ENCODE measurements at regions of chr15 and their contacts with region 1.

Region 1: DNA sequence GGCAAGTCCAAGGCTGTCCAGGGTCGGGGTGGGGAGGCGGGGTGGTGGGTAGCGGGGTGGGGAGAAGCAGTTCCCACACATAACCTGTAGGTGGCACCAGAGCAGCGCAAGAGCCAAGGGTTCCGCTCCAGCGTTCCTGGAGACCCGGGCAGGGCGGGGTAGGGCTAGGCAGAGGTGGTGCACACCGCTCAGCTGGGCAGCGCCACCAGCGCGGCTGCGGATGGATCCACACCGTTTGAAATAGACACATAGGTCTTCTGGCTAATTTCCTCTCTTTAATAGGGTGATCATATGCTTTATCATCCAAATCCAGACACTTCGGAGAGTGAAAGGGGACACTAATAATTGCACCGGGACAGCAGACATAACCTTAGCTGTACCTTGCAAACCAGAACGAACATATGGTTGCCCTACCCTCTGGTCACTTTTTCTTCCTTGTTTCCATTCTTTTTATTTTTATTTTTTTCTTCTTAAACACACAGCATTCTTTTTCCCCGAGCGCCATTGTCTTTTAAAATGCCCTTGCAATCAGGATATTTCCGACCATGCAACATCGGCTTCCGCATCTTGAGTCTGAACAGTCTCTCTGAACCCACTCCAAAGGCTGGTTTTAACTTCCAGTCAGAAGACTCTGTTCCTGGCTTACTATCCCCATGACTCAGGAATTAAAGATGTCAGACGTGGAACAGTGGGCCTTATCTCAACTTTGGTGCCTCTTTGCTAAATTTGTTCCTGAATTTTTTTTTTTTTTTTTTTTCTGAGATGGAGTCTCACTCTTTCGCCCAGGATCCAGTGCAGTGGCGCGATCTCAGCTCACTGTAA is 12.5 kb upstream of the ZSCAN2 start:
- DNase-seq: peak; percentile 50
- H3K4me3 ChIP-seq: peak overlapping the region; percentile 48
- H3K27ac ChIP-seq: no peak overlapping the region
- H3K27me3 ChIP-seq: peaks cover 5% of the 10 kb centered on the region
- CTCF ChIP-seq: peak; percentile 71

Region 2: DNA sequence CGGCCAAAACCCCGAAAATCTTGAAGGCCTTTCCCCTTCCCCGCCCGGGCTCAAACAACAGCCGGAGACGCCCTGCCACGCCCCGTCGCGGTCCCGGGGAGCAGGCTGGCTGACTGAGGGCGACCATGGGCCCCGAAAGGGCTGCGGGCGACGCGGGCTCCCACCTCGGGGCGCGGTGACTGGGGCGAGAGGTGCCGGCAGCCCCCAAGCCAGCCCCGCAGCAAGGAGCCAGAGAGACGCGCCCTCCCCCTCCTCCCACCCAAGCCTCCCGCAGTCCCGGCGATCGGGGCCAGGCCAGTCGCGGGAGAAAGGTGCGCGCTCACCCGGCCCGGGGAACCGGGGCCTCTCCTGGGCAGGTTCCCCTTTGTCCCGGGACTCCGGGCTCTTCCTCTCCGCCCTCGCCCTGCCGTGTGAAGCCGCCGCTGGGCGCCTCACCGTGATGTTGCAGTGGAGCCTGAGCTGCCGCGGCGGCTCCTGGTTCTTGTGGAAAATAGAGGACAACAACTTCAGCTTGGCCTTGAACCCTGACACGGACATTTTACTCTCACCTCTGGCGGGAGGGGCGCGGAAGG is 18.0 kb before region 1 on chr15:
- CTCF ChIA-PET with region 1: interaction called, 13 read pairs
- POLR2A ChIA-PET with region 1: interaction called, 3 read pairs
- DNase-seq: no peak
- H3K4me3 ChIP-seq: peak overlapping the region; percentile 73
- H3K27ac ChIP-seq: peak overlapping the region; percentile 88
- H3K27me3 ChIP-seq: no peaks in the 10 kb centered on the region
- CTCF ChIP-seq: no peak

Region 3: DNA sequence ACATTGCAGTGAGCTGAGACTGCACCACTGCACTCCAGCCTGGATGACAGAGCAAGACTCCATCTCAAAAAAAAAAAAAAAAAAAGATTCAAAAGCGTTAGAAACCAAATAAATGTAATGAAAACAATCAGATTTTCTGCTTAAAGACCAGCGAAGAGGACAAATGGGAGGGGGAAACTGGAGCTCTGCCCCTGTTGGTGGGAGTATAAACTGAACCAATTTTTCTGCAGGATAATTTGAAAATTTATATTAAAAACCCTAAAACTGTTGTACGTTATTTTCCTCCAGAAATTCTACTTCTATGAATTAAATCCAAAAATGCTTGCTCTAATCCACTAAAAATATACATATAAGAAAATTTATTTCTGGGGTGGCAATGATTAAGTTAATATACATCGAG is 12.8 kb before region 1 on chr15:
- CTCF ChIA-PET with region 1: interaction called, 13 read pairs
- POLR2A ChIA-PET with region 1: interaction called, 3 read pairs
- DNase-seq: no peak
- H3K4me3 ChIP-seq: no peak overlapping the region
- H3K27ac ChIP-seq: no peak overlapping the region
- H3K27me3 ChIP-seq: no peaks in the 10 kb centered on the region
- CTCF ChIP-seq: no peak

Region 4: DNA sequence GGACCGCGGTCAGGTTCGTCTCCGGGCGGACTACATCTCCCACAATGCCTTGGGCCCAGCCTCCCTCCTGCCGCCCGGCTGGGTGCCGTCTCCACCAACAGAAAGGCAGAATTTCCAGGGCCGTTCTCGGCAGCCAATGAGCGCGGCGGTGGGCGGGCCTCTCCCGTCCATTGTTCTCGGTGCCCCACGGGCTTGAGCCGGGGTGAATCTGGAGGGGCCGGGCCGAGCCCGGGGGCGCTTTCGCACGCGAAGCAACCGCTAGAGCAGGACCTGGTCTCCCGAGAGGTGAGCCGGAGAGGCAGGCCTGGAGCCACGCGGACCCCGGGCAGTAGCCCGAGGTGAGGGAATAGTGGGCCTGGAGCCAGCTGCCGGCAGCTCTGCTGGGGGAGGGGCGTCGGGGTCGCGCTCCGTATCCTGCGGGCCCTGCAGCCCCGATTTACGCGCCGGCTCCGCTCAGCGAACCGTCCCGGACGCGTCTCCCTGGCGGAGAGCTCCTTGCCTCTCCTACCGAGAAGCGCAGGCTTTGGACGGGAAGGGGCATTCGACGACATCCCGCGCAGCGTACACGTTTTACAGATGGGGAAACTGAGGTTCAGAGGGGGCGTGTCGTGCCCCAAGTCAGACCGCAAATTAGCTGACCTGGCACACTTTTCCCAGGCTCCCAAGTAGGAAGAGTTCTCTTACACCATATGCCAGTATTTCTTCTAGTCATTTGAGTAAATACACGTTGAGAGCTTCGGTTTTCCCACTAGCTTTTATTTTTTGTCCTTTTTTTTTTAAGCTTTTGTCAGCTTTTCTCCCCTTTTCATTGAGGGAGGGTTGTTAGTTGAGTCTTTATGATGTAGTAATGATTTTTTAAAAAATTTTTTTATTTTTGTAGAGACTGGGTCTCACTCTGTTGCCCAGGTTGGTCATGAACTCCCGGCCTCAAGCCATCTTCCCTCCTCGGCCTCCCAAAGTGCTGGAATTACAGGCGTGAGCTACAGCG is 12.9 kb after region 1 on chr15 and contains the start of gene ZSCAN2:
- CTCF ChIA-PET with region 1: interaction called, 39 read pairs
- POLR2A ChIA-PET with region 1: no interaction called
- DNase-seq: peak; percentile 77
- H3K4me3 ChIP-seq: peak within 1 kb of the TSS; percentile 99
- H3K27ac ChIP-seq: peak within 1 kb of the TSS; percentile 68
- H3K27me3 ChIP-seq: peaks cover under 1% of the 10 kb centered on the region
- CTCF ChIP-seq: no peak
- polyA plus RNA-seq, gene ZSCAN2: 16.2 and 17.0 TPM in 2 replicates

Region 5: GRCh38 chr15:84621358-84621979 is 33.2 kb after region 1 on chr15:
- CTCF ChIA-PET with region 1: interaction called, 12 read pairs
- POLR2A ChIA-PET with region 1: interaction called, 5 read pairs
- DNase-seq: no peak
- H3K4me3 ChIP-seq: no peak overlapping the region
- H3K27ac ChIP-seq: no peak overlapping the region
- H3K27me3 ChIP-seq: no peaks in the 10 kb centered on the region
- CTCF ChIP-seq: no peak

Region 6: DNA sequence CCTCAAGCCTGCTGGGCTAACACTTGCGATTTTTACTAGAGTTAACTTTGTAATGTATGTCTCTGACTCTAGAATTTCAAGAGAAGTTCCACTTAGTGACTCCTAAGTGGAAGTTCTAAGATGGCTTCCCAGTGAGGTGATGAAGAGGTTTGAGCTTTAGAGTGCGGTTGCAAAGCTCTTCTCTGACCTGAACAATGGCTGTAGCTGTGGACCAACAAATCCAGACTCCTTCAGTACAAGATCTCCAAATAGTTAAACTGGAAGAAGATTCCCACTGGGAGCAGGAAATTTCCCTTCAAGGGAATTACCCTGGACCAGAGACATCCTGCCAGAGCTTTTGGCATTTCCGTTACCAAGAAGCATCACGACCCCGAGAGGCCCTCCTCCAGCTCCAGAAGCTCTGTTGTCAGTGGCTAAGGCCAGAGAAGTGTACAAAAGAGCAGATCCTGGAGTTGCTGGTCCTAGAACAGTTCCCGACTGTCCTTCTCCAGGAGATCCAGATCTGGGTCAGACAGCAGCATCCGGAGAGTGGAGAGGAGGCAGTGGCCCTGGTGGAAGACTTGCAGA is 43.5 kb after region 1 on chr15:
- CTCF ChIA-PET with region 1: interaction called, 21 read pairs
- POLR2A ChIA-PET with region 1: no interaction called
- DNase-seq: no peak
- H3K4me3 ChIP-seq: peak overlapping the region; percentile 84
- H3K27ac ChIP-seq: peak overlapping the region; percentile 61
- H3K27me3 ChIP-seq: no peaks in the 10 kb centered on the region
- CTCF ChIP-seq: no peak

Region 7: DNA sequence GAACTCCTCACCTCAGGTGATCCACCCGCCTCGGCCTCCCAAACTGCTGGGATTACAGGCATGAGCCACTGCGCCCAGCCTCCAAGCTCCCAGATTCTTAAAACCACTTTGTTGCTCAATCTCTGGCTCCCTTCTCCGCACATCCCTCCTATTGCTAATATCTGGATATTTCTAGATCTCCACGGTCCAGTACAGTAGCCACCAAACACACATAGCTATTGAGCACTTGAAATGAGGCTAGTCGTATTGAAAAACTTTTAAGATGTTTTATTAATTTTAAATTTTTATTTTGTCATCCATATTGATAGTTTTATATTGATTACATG is 340.5 kb after region 1 on chr15:
- CTCF ChIA-PET with region 1: interaction called, 32 read pairs
- POLR2A ChIA-PET with region 1: no interaction called
- DNase-seq: no peak
- H3K4me3 ChIP-seq: no peak overlapping the region
- H3K27ac ChIP-seq: no peak overlapping the region
- H3K27me3 ChIP-seq: no peaks in the 10 kb centered on the region
- CTCF ChIP-seq: no peak

Measured in AG04450 (cell line).